ENCODE measurements at regions of chr7 and their contacts with region 1.

Region 1: DNA sequence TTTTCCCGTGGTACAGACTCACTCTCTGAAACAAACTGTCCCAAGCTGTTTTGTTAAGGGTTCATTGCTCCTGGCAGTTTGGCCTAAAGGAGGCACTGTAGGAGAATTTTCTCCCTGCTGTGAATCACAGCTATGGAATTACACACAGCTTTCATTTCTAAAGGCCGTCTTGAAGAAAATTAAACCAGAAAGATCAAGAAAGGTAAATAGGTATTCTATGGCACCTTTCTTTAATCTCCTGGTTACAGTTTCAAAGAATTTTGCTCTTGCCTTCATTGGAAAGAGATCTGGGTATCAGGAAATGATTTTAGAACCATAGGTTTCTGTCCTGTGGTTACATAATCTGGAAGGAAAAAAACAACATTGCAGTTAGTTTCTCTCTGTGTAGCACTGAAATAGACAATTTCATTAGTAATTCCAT is 51.2 kb downstream of the PDK4 start:
- DNase-seq: peak; percentile 34
- H3K4me3 ChIP-seq: peak overlapping the region; percentile 26
- H3K27ac ChIP-seq: no peak overlapping the region
- H3K27me3 ChIP-seq: peaks cover 2% of the 10 kb centered on the region
- CTCF ChIP-seq: peak; percentile 83

Region 2: GRCh38 chr7:95527033-95527775 is 17.9 kb before region 1 on chr7:
- CTCF ChIA-PET with region 1: interaction called, 77 read pairs
- POLR2A ChIA-PET with region 1: no interaction called
- DNase-seq: no peak
- H3K4me3 ChIP-seq: no peak overlapping the region
- H3K27ac ChIP-seq: no peak overlapping the region
- H3K27me3 ChIP-seq: no peaks in the 10 kb centered on the region
- CTCF ChIP-seq: peak; percentile 90

Region 3: DNA sequence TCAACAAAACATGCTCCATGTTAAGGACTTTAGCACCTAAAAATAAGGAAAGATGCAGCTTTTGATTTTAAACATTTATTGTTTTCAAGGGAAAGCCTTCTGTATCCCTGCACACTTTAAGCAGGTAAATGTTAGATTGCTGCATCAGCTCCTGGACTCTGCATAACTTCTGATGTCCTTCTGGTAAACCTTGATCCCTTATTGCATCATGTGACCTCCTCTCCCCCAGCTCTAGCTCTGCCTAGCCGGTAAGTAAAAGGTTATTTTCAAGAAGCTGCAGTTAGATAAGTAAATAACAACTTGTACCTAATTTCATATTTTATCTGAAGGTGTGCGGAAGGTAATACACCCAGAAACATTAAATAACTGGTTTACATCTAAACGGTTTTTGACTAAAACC is 13.8 kb after region 1 on chr7:
- CTCF ChIA-PET with region 1: interaction called, 12 read pairs
- POLR2A ChIA-PET with region 1: no interaction called
- DNase-seq: no peak
- H3K4me3 ChIP-seq: no peak overlapping the region
- H3K27ac ChIP-seq: no peak overlapping the region
- H3K27me3 ChIP-seq: no peaks in the 10 kb centered on the region
- CTCF ChIP-seq: no peak

Region 4: DNA sequence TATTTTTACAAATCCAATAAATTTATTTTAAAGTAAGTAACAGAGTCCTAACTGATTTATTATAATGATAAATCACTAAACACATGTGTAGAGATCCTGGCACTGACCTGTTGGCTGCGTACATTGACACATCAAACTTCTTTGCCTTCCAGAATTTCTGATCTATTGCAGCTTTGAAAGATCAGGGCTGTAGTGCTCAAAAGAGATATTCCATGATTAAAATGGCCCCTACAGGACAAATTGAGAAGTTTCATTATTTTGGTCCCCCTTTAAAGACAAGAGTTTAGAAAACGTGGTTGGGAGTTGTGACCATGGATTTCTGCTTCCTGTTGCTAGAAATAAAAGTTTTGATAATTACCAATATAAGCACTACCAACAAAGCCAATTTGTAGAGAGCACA is 138.9 kb after region 1 on chr7:
- CTCF ChIA-PET with region 1: interaction called, 367 read pairs
- POLR2A ChIA-PET with region 1: no interaction called
- DNase-seq: no peak
- H3K4me3 ChIP-seq: no peak overlapping the region
- H3K27ac ChIP-seq: no peak overlapping the region
- H3K27me3 ChIP-seq: no peaks in the 10 kb centered on the region
- CTCF ChIP-seq: peak; percentile 48